Brain microvascular endothelial cell (primary cell): ENCODE measurements at regions of chr1 and their contacts with region 1.

Region 1: DNA sequence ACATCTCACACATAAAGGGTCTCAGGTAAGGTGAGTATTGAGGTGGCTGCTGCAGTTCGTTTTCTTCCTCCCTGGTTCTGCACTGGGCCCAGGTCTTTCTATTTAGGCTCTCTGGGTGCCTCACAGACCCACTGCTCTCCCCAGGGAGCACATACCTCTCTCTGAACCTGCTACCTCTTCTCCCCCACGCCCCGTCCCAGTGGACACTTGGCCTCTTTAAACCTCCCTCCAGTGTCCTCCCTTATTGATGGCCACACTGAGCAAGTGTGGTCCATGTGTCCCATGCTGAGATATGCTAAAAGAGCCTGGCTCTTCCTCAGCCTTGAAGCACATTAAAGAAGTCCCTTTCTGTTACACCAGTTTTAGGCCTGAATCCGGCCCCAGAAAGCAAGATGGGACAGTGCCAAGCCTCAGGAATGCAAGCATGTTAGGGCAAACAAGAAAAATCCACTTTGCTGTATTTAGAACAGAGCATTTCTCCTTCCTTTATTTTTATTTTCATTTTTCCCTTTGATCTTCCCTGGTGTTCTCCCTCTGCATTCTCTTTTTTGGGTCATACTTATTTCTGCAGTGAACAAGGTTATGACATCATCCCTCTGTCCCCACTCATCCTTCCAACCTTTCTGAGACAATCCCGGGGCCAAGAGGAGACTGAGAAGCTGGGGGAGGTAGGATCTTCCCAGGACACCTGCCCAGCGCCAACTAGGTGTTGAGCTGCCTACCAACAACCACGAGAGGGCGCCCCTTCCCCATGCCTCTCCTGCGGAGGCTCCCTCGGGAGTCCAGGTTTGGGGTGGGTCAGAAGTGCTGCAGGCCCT is 5.0 kb upstream of the CHI3L2 start:
- DNase-seq: peak; percentile 16
- H3K4me3 ChIP-seq: no peak overlapping the region
- H3K27ac ChIP-seq: no peak overlapping the region
- H3K27me3 ChIP-seq: no peaks in the 10 kb centered on the region
- CTCF ChIP-seq: peak; percentile 99

Region 2: DNA sequence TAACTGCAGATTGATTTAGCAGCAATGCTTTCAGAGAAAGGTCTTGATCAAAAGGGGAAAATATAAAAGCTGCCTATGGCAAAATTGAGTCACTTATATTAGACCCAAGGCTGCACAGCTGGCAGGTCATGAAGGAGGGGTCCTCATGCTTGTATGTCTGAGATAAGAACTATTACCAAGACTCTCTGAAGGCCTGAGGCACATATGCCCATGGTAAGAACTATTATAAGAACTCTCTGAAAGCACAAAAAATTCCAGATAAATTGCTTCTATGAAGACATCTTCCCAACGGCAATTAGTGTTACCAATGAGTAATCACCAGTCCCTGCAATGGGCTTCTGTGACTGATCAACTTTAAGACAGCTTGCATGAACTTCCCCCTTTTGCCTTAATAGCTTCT is 216.0 kb before region 1 on chr1:
- in situ Hi-C with region 1: no loop called
- DNase-seq: no peak
- H3K4me3 ChIP-seq: no peak overlapping the region
- H3K27ac ChIP-seq: no peak overlapping the region
- H3K27me3 ChIP-seq: no peaks in the 10 kb centered on the region
- CTCF ChIP-seq: no peak

Region 3: DNA sequence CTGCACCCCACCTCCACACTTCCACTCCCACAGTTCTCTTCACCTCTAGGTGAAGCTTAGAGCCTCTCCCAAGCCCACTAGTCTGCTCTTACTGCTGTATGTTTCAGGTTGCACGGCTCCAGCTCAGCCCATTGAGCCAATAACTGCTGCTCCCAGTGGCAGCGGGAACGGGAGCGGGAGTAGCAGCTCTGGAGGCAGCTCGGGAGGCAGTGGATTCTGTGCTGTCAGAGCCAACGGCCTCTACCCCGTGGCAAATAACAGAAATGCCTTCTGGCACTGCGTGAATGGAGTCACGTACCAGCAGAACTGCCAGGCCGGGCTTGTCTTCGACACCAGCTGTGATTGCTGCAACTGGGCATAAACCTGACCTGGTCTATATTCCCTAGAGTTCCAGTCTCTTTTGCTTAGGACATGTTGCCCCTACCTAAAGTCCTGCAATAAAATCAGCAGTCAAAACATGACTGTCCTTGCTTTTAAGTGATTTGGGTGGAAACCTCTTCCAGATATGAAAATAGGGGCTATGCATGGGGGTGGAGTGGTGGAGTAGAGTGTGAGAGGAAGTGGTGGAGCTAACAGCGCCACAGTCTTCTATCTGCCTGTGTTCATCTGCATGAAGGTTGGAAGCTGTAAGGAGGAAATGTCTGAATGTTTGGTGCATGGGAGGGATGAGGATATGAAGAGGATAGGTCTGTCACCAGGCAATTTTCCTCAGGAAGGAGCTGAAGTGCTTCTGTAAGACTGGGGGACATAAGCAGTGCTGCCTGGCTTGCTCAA is 97.8 kb after region 1 on chr1:
- in situ Hi-C with region 1: no loop called
- DNase-seq: no peak
- H3K4me3 ChIP-seq: no peak overlapping the region
- H3K27ac ChIP-seq: no peak overlapping the region
- H3K27me3 ChIP-seq: no peaks in the 10 kb centered on the region
- CTCF ChIP-seq: no peak

Region 4: GRCh38 chr1:111399792-111400610 is 177.5 kb after region 1 on chr1:
- in situ Hi-C with region 1: loop called (anchors 25 kb)
- DNase-seq: peak; percentile 42
- H3K4me3 ChIP-seq: no peak overlapping the region
- H3K27ac ChIP-seq: no peak overlapping the region
- H3K27me3 ChIP-seq: no peaks in the 10 kb centered on the region
- CTCF ChIP-seq: peak; percentile 65

Region 5: GRCh38 chr1:111833334-111833733 is 610.8 kb after region 1 on chr1:
- in situ Hi-C with region 1: no loop called
- DNase-seq: peak; percentile 7
- H3K4me3 ChIP-seq: no peak overlapping the region
- H3K27ac ChIP-seq: no peak overlapping the region
- H3K27me3 ChIP-seq: no peaks in the 10 kb centered on the region
- CTCF ChIP-seq: no peak